ENCODE measurements at regions of chr9 and their contacts with region 1.

Region 1: DNA sequence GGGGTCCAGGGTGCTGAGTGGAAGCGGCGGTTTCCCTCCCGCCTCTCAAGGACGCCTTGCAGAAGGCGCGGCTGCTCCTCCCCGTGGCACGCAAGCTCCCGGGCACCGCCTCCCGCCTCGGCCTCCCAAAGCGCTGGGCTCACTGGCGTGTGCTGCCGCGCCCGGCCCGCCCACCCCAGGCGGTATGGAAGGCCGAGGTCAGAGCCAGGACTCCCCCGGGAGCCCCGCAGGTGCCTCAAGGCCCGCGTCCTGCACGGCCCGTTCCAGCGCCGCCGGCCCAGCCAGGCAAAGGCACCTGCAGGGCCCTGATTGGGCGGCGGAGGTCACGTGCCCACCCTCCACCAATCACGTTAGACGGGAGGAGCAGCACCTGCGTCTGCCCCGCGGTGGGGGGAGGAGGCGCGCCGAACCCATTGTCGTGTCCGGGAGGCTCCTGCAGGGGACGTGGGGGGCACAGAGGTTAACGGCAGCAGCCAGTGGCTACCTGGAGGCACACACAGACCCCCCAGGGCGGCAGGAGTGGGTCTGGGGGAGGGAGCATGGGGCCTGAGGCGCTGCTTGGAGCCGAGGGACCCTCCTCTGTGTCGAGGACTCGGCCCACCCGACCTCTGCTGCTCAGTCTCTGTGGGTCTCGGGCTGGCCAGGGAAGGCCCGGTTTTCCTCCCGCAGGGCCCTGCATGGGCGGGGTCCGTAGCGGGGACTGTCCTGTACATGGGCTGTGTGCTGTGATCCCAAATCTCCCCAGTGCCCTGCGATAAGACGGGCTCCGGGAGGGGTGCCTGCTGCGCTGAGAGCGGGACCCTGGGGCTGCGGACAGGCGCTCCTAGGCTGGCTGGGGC is 2.0 kb upstream of the LCN12 start:
- DNase-seq: peak; percentile 93 to 98 (median 97)
- H3K4me3 ChIP-seq: peak overlapping the region; percentile 77
- H3K4me3 Mint-ChIP-seq: peak overlapping the region; percentile 81 to 92 (median 87)
- H3K27ac ChIP-seq: peak overlapping the region; percentile 78
- H3K27ac Mint-ChIP-seq: peak overlapping the region; percentile 80 to 94 (median 86)
- H3K4me1 ChIP-seq: peaks cover 14% of the 10 kb centered on the region
- H3K4me1 Mint-ChIP-seq: peaks cover 0 to 34% (median 7%) of the 10 kb centered on the region in 3 donors
- H3K27me3 ChIP-seq: no peaks in the 10 kb centered on the region
- H3K27me3 Mint-ChIP-seq: no peaks in the 10 kb centered on the region

Region 2: DNA sequence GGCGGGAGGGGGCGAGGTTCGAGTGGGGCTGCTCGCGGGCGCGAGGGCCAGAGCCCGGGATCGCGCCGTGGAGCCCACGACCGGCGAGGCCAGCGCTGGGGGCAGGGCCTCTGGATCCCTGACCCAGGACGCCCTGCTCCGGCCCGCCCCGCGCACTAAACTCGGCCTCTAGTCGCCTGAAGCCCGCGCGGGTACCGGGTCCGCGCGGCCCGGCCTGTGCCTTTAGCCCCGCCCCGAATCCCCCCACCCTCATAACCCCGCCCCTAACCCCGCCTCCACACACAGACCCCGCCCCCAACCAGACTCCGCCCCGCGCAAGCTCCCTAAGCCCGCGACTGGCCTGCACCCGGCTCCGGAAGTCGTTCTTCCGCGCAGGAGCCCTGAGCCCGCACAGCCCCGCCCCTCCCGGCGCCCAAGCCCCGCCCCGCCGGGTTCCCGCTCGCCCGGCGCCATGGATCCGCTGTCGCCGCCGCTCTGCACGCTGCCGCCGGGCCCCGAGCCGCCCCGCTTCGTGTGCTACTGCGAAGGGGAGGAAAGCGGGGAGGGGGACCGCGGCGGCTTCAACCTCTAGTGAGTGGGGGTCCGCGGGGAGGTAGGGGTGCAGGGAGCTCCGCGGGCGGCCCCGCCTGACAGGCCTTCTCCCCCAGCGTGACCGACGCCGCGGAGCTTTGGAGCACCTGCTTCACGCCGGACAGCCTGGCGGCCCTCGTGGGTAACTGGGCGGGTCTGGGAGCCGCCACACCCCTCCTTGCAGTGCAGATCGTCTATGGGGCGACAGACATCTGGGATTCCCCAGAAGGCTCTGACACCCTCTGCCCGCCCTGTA is 42.2 kb after region 1 on chr9 and contains the start of gene PAXX:
- CTCF ChIA-PET with region 1: interaction called, 12 read pairs
- POLR2A ChIA-PET with region 1: interaction called, 7 read pairs
- DNase-seq: peak; percentile 91 to 95 (median 92)
- H3K4me3 ChIP-seq: peak within 1 kb of the TSS; percentile 65
- H3K4me3 Mint-ChIP-seq: peak within 1 kb of the TSS; percentile 84 to 95 (median 87)
- H3K27ac ChIP-seq: peak within 1 kb of the TSS; percentile 83
- H3K27ac Mint-ChIP-seq: peak within 1 kb of the TSS; percentile 92 to 98 (median 96)
- H3K4me1 ChIP-seq: peaks cover 28% of the 10 kb centered on the region
- H3K4me1 Mint-ChIP-seq: peaks cover 19 to 50% (median 22%) of the 10 kb centered on the region in 3 donors
- H3K27me3 ChIP-seq: no peaks in the 10 kb centered on the region
- H3K27me3 Mint-ChIP-seq: peaks cover 2 to 3% of the 10 kb centered on the region in 2 donors
- total RNA-seq, gene PAXX: 78.4 to 82.2 TPM

Region 3: DNA sequence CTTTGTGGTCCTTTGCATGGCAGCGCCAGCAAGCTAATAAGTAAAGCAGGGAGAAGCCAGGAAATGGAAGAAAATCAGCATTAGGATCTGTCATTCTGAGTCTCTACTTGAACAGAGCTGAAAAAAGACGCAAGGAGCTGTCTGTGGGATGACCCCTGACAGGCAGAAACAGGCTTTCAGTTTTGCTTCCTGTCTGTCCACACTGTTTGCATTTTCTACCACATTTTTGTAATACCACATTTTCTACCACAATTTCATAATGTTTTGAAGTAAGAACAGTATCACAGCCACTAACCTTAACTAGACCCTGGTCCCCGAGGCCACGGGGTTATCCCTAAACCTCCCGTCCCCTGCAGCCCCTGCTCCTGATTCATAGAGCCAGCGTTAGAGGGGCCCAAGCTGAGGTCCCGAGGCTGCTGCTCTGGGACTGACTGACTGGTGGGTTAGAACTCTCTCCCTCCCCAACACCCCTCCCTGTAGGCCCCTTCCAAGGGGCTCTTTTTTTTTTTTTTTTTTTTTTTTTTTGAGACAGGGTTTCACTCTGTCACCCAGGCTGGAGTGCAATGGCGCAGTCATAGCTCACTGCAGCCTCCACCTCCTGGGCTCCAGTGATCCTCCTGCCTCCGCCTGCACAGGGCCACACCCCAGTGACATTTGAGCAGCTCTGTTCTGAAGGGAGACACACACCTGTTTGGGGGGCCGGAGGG is 50.3 kb after region 1 on chr9:
- CTCF ChIA-PET with region 1: interaction called, 12 read pairs
- POLR2A ChIA-PET with region 1: interaction called, 3 read pairs
- DNase-seq: peak in 2 of 5 donors; percentile 29 to 61
- H3K4me3 ChIP-seq: no peak overlapping the region
- H3K4me3 Mint-ChIP-seq: peak overlapping the region; percentile 62 to 93 (median 79)
- H3K27ac ChIP-seq: peak overlapping the region; percentile 43
- H3K27ac Mint-ChIP-seq: peak overlapping the region; percentile 84 to 96 (median 91)
- H3K4me1 ChIP-seq: peaks cover 46% of the 10 kb centered on the region
- H3K4me1 Mint-ChIP-seq: peaks cover 38 to 60% (median 40%) of the 10 kb centered on the region in 3 donors
- H3K27me3 ChIP-seq: no peaks in the 10 kb centered on the region
- H3K27me3 Mint-ChIP-seq: no peaks in the 10 kb centered on the region

Region 4: GRCh38 chr9:137108608-137109249 is 158.7 kb after region 1 on chr9:
- CTCF ChIA-PET with region 1: no interaction called
- POLR2A ChIA-PET with region 1: no interaction called
- DNase-seq: no peak
- H3K4me3 ChIP-seq: no peak overlapping the region
- H3K4me3 Mint-ChIP-seq: no peak overlapping the region
- H3K27ac ChIP-seq: no peak overlapping the region
- H3K27ac Mint-ChIP-seq: no peak overlapping the region
- H3K4me1 ChIP-seq: peaks cover 5% of the 10 kb centered on the region
- H3K4me1 Mint-ChIP-seq: peaks cover 0 to 9% (median 3%) of the 10 kb centered on the region in 3 donors
- H3K27me3 ChIP-seq: no peaks in the 10 kb centered on the region
- H3K27me3 Mint-ChIP-seq: no peaks in the 10 kb centered on the region